GM10248 (cell line): ENCODE measurements at regions of chr14 and their contacts with region 1.

Region 1: GRCh38 chr14:22556990-22557623 is 31.9 kb downstream of the DAD1 start:
- DNase-seq: peak; percentile 77
- CTCF ChIP-seq: peak; percentile 92

Region 2: DNA sequence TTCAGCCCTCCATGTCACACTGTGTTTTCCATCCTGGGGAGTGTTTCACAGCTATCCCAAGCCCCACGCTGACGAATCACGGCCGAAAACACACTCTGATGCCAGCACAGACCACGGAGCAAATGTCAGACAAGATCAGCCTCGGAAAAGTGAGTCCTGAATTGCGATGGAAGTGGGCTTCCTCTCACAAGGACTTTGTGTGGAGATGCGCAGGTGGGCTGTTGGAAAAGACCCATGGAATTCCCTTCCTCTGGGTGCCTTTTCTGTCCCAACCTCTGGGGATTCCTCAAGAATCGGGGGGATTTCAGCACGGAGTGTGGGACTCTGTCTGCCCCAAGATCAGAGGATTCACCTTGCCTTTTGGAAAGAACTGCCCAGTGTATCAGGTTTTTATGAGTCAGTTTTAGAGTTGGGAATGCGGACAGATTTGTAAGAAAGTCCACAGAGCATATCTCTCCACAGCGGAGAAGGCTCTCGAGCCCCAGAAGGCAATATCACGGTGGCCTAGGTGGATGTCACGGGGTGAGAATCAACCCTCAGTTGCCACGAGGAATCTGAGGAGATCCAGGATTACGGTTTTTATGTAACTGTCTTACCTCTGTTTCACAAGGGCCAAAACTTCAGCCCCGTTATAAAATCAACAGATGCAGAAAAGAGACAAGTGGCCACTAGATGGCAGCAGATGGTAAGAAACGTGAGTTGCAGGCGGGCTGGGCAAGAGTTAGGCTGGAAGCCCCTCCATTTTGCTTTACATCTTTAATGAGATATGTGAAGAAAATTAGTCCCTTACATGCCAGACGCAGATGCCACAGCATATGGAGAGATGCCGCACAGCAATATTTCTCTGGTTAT is 170.0 kb before region 1 on chr14:
- CTCF ChIA-PET with region 1: interaction called, 30 read pairs
- POLR2A ChIA-PET with region 1: no interaction called
- DNase-seq: peak; percentile 79
- CTCF ChIP-seq: peak; percentile 76

Region 3: DNA sequence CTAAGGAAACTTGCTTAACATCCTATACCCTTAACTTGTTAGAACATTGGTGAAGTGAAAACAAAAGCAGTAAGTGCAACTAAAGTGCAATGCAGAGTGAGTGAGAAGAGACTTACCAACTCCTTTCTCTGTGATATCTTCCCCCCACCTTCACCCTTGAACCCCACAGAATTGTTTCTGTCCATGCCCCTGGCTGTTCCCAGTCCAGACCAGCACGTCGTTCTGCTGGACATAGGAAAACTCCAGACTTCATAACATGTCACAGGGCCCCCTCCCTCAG is 60.0 kb before region 1 on chr14:
- CTCF ChIA-PET with region 1: interaction called, 11 read pairs
- POLR2A ChIA-PET with region 1: interaction called, 5 read pairs
- DNase-seq: no peak
- CTCF ChIP-seq: no peak

Region 4: DNA sequence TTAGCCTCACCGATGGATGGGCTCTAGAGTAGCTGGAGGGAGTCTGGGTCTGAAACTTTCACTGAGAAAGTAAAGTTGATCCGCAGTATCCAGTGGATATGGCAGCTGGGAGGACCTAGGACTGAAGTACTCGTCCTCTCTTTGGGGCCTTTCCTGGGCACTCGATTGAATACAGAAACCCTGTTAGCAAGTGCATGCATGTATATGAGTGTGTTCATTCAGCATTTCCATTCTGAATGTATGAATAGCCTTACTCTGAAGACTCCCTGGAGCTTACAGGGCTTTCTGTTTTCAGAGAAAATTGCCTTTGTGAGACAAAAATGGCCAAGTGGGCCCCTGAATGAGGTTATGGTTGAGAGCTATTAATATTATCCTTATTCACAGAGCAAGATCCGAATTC is 30.9 kb before region 1 on chr14:
- CTCF ChIA-PET with region 1: interaction called, 20 read pairs
- POLR2A ChIA-PET with region 1: no interaction called
- DNase-seq: no peak
- CTCF ChIP-seq: no peak

Region 5: DNA sequence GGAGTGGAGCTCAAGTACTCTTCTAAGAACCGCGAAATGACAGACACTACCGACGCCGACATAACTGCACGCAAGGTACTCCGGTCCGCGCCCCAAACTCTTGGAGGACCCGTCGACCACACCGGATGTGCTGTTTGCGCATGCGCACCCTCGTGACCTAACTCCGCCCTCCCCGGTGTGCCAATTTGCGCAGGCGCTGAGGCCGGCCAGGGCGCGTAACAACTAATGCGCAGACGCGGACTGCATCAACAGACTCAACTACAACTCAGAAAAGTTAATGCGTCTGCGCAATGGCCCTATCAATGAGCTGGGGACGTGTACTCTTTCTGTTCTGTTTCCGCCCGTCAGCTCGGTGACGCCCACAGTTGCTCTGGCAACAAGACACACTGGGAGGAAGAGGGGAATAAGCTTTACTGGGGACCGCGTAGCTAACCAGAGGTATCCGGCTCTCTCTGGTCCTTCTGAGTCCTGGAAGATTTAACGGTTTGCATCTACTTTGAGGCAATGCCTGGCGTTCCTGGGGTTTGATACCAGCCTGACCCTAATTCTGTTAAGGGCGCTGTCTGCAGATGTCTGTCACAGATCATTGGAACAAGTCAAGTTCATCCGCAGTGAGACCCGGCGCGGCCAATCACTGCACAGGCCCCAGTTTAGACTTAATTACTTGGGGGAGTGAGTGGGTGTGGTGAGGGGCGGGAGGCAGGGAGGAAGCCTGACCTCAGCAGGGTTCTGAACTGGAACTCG is 32.2 kb after region 1 on chr14 and contains the start of gene DAD1:
- CTCF ChIA-PET with region 1: interaction called, 19 read pairs
- POLR2A ChIA-PET with region 1: interaction called, 3 read pairs
- DNase-seq: peak; percentile 98
- CTCF ChIP-seq: no peak

Region 6: DNA sequence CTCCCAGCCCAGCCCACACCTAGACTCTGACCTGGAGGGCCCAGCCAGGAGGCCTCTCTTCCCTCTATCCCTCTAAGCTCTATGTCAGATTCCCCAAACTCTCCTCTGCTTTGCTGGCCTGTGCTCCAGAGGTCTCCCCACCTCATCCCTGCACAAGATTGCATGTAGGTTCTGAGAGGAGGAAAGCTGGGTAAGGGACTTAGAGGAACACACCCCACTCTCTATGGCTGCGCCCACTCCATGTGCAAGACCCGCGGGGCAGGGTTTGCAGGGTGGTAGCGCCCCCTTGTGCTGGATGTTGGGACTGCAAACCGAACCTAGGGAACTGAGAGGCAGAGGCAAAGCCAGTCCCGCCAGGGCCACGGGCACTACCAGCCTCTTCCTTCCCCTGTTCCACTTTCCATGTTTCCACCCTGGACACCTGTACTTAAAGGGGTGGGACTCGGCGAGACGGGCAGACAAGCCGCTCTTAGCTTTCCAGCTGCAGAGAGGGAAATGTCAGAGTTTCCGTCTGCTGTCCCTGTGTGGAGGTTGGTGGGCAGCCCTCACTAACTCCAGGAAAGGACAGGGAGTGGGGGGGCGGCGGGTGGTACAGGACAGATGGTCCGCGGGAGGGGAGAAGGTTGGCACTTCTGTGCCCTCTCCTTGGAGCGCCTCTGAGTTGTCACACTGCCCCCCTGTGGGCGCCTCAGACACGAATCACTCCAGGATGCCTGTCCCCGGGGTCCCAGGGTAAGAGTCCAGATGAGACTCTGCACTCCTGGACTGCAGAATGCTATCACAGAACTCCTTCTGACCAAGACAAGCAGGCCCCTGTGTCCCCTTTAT is 296.0 kb after region 1 on chr14:
- CTCF ChIA-PET with region 1: interaction called, 15 read pairs
- POLR2A ChIA-PET with region 1: no interaction called
- DNase-seq: peak; percentile 87
- CTCF ChIP-seq: peak; percentile 86